ENCODE measurements at regions of chr20 and their contacts with region 1.

Region 1: GRCh38 chr20:38057351-38057972 is 23.9 kb downstream of the RPRD1B start:
- DNase-seq: peak; percentile 60
- CTCF ChIP-seq: peak; percentile 80

Region 2: GRCh38 chr20:38152621-38153231 is 95.3 kb after region 1 on chr20:
- in situ Hi-C with region 1: loop called (anchors 10 kb)
- DNase-seq: no peak
- CTCF ChIP-seq: no peak

Region 3: DNA sequence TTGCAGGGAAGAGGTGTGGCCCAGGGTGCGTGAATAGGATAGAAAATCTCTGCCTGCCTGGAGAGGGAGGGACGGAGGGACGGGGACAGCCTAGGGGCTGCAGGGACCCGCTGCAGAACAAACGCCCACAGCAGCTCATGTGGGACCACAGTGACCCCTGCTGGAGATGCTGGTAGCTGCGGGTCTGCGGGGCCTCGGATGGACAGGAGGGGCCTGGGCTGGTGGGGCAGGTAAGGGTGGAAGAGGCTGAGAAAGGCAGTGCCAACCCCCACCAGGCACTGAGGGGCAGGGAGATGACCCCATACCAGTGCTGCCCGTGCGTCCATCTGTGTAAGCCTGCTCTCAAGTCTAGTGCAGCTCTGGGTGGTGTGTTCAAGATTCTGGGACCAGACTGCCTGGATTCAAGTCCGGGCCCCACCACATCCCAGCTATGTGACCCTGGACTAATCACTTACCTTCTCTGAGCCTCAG is 163.7 kb after region 1 on chr20:
- in situ Hi-C with region 1: loop called (anchors 10 kb)
- DNase-seq: peak; percentile 91
- CTCF ChIP-seq: peak; percentile 94

Region 4: GRCh38 chr20:38418509-38419204 is 361.2 kb after region 1 on chr20:
- in situ Hi-C with region 1: loop called (anchors 25 kb)
- DNase-seq: no peak
- CTCF ChIP-seq: no peak

Measured in GM13977 (cell line).